BJ (cell line): ENCODE measurements at regions of chr1 and their contacts with region 1.

Region 1: GRCh38 chr1:21216835-21217811 is 40.4 kb upstream of the EIF4G3 start:
- DNase-seq: no peak
- H3K4me3 ChIP-seq: no peak overlapping the region
- H3K27me3 ChIP-seq: no peaks in the 10 kb centered on the region
- CTCF ChIP-seq: peak; percentile 83

Region 2: GRCh38 chr1:21149862-21150432 is 67.2 kb before region 1 on chr1:
- CTCF ChIA-PET with region 1: no interaction called
- POLR2A ChIA-PET with region 1: no interaction called
- DNase-seq: peak; percentile 92
- H3K4me3 ChIP-seq: no peak overlapping the region
- H3K27me3 ChIP-seq: no peaks in the 10 kb centered on the region
- CTCF ChIP-seq: no peak

Region 3: DNA sequence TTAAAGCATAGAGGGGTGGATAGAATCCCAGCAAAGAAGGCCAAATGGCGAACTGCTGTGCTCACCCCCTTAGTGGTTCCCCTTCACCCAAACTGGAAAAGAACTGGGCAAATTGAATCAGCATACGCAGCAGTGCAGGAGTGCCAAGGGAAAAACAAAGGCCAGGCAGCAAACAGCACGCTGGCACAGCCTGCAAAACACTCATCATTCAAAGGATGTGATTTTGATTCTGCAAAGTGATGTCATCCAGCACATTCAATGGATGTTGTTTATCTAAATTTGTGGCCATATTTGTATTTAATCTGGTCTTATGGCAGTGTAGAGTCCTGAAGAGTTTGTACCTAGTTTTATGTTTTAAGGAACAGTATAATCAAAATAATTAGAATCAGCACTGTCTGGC is 145.0 kb after region 1 on chr1:
- CTCF ChIA-PET with region 1: interaction called, 12 read pairs
- POLR2A ChIA-PET with region 1: no interaction called
- DNase-seq: no peak
- H3K4me3 ChIP-seq: no peak overlapping the region
- H3K27me3 ChIP-seq: no peaks in the 10 kb centered on the region
- CTCF ChIP-seq: no peak